ENCODE measurements at regions of chr11 and their contacts with region 1.

Region 1: GRCh38 chr11:65497141-65498041 is 1.5 kb upstream of the MALAT1 start:
- DNase-seq: peak; percentile 99
- H3K4me3 Mint-ChIP-seq: no peak overlapping the region
- H3K27ac Mint-ChIP-seq: no peak overlapping the region
- H3K4me1 Mint-ChIP-seq: peaks cover 37% of the 10 kb centered on the region
- H3K27me3 Mint-ChIP-seq: no peaks in the 10 kb centered on the region
- CTCF ChIP-seq: no peak

Region 2: GRCh38 chr11:64703048-64703447 is 794.3 kb before region 1 on chr11:
- CTCF ChIA-PET with region 1: no interaction called
- intact Hi-C with region 1: no loop called
- DNase-seq: no peak
- H3K4me3 Mint-ChIP-seq: no peak overlapping the region
- H3K27ac Mint-ChIP-seq: no peak overlapping the region
- H3K4me1 Mint-ChIP-seq: no peaks in the 10 kb centered on the region
- H3K27me3 Mint-ChIP-seq: peaks cover 86% of the 10 kb centered on the region
- CTCF ChIP-seq: no peak

Region 3: GRCh38 chr11:65424205-65425104 is 72.9 kb before region 1 on chr11:
- CTCF ChIA-PET with region 1: interaction called, 4 read pairs
- intact Hi-C with region 1: loop called (anchors 1 kb)
- DNase-seq: no peak
- H3K4me3 Mint-ChIP-seq: peak overlapping the region; percentile 90
- H3K27ac Mint-ChIP-seq: peak overlapping the region; percentile 99
- H3K4me1 Mint-ChIP-seq: peaks cover 54% of the 10 kb centered on the region
- H3K27me3 Mint-ChIP-seq: peaks cover 16% of the 10 kb centered on the region
- CTCF ChIP-seq: no peak

Region 4: GRCh38 chr11:65477149-65477965 is 20.0 kb before region 1 on chr11:
- CTCF ChIA-PET with region 1: interaction called, 41 read pairs
- intact Hi-C with region 1: no loop called
- DNase-seq: peak; percentile 98
- H3K4me3 Mint-ChIP-seq: peak overlapping the region; percentile 89
- H3K27ac Mint-ChIP-seq: peak overlapping the region; percentile 98
- H3K4me1 Mint-ChIP-seq: peaks cover 48% of the 10 kb centered on the region
- H3K27me3 Mint-ChIP-seq: no peaks in the 10 kb centered on the region
- CTCF ChIP-seq: no peak

Measured in Calu3 (cell line).